Mammary epithelial cell (primary cell): ENCODE measurements at regions of chr14 and their contacts with region 1.

Region 1: DNA sequence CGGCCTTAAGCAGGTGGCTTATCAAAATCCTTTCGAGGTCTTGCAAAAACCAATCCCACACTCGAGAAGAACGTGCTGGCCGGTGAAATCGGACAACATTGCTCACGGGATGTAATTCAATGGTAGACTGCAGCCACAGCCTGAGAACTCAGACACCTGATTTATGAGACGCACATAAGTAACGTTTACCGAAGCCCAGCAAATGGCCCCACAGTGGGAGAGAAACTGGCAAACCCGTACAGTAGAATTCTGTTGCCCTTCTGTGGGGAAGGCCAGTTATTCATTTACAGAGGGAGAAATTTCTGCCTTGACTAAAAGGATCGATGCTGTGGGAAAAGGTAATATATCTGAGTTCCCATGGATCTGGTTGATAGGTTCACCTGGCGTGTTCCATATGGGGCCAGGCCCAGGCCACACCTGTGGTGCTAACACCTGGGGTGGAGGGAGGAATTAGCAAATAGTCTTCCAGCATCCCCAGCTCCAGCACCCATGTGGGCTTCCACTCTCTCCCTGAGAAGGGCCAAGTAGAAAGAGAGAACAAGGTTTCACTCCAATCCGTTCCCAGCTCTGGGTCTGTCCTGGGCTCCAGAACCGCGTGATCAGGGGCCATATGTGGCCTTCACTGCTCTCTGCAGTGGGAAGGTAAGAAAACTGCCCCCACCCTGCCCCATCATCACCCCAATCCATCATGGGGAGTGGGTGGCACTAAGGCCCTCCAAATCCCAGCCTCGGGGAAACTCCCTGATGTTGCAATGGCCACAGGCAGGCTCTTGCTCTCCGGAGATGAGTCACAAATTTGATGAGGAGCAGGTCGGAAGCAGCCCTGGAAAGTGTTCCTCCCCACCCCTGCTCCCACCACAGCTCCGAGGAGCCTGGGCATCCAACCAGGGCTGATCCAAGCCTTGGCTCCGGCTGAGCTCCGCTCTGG is 12.7 kb downstream of the BDKRB1 start:
- DNase-seq: peak; percentile 99
- H3K4me3 ChIP-seq: no peak overlapping the region
- H3K27ac ChIP-seq: peak overlapping the region; percentile 78
- H3K4me1 ChIP-seq: peaks cover 46% of the 10 kb centered on the region
- H3K27me3 ChIP-seq: no peaks in the 10 kb centered on the region
- CTCF ChIP-seq: no peak

Region 2: DNA sequence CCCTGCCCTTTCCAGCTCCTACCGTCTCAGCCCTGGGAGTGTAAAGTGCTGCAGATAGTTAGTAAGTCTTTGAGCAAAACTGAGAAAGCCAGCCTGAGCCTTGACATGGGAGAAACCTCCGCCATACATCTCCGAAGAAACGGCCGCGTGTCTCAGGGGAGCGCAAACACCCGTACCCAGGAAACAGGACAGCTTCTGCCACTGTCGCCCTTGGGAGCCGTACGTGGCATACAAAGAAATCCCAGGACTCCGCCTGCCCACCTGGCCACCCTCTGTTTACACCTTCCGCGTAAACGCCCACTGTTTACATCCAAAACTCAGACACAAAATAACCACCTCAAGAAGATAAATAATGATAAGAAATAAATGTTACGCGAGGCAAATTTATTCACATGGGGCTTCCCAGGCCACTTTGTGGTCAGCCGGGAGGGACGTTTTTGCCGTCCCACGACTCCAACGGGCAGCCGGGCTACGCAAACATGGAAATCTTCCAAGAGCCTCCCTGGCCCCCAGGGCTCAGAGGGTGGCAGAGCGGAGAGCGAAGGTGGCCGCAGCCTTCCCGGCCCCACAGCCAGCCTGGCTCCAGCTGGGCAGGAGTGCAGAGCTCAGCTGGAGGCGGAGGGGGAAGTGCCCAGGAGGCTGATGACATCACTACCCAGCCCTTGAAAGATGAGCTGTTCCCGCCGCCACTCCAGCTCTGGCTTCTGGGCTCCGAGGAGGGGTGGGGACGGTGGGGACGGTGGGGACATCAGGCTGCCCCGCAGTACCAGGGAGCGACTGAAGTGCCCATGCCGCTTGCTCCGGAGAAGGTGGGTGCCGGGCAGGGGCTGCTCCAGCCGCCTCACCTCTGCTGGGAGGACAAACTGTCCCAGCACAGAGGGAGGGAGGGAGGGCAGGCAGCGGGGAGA is 64.3 kb before region 1 on chr14 and contains the start of gene BDKRB2:
- CTCF ChIA-PET with region 1: no interaction called
- dilution Hi-C with region 1: no loop called
- in situ Hi-C with region 1: no loop called
- intact Hi-C with region 1: loop called (anchors 2 kb)
- DNase-seq: peak; percentile 85
- H3K4me3 ChIP-seq: peak within 1 kb of the TSS; percentile 44 to 68 (median 65)
- H3K27ac ChIP-seq: peak within 1 kb of the TSS; percentile 75
- H3K4me1 ChIP-seq: peaks cover 42% of the 10 kb centered on the region
- H3K27me3 ChIP-seq: no peaks in the 10 kb centered on the region
- CTCF ChIP-seq: no peak
- total RNA-seq, gene BDKRB2: 7.5 to 21.1 TPM

Region 3: GRCh38 chr14:96255501-96256366 is 13.0 kb before region 1 on chr14 and contains the start of gene BDKRB1:
- CTCF ChIA-PET with region 1: interaction called, 3 read pairs
- dilution Hi-C with region 1: no loop called
- in situ Hi-C with region 1: no loop called
- intact Hi-C with region 1: loop called (anchors 2 kb)
- DNase-seq: peak; percentile 56
- H3K4me3 ChIP-seq: no peak within 1 kb of the TSS
- H3K27ac ChIP-seq: peak within 1 kb of the TSS; percentile 34
- H3K4me1 ChIP-seq: peaks cover 31% of the 10 kb centered on the region
- H3K27me3 ChIP-seq: no peaks in the 10 kb centered on the region
- CTCF ChIP-seq: no peak
- total RNA-seq, gene BDKRB1: 0.17 to 4.8 TPM

Region 4: GRCh38 chr14:96710060-96710666 is 441.5 kb after region 1 on chr14:
- CTCF ChIA-PET with region 1: no interaction called
- dilution Hi-C with region 1: no loop called
- in situ Hi-C with region 1: no loop called
- intact Hi-C with region 1: no loop called
- DNase-seq: no peak
- H3K4me3 ChIP-seq: no peak overlapping the region
- H3K27ac ChIP-seq: no peak overlapping the region
- H3K4me1 ChIP-seq: no peaks in the 10 kb centered on the region
- H3K27me3 ChIP-seq: no peaks in the 10 kb centered on the region
- CTCF ChIP-seq: no peak